ENCODE measurements at regions of chr19 and their contacts with region 1.

Region 1: DNA sequence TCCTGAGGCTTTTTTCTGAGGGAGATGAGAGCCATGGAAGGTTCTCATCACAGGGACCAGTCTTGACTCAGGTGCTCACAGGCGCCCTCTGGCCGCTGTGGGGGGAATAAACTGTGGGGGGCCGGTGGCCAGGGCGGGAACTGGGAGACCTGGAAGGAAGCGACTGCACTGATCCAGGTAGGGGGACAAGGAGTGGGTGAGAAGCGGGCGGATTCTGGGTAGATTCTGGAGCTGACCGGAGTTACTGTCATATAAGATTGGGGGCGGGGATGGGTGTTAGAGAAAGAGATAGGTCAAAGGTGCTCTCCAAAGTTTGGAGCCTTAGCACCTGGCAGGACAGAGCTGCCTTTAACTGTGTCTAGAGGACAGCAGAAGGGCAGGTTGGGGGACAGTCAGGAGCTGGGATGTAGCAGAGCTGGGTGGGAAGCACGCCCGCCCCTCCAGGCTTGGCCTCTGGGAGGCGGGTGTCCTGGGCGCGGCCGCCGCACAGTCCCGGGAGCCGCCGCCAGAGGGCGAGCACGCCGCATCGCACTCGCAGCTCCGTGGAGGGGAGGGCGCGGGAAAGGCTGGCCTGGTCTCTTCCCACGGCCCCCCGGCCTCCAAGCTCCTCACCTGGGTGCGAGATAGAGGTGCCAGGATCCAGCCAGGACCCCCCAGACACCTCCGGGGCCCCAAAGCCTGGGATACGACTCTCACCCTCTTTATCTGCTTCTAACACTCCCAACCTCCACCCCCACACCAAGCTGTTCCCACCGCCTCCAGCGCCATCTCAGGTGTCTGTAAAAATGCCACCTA is 4.2 kb upstream of the DAND5 start:
- DNase-seq: peak; percentile 91
- ATAC-seq: peak; percentile 95
- H3K4me3 Mint-ChIP-seq: peak overlapping the region; percentile 71
- H3K27ac Mint-ChIP-seq: peak overlapping the region; percentile 65
- H3K4me1 Mint-ChIP-seq: 0 out of 2 replicates have a peak, but pooled peaks cover 5% of the 10 kb centered on the region
- H3K27me3 Mint-ChIP-seq: peaks cover 14% of the 10 kb centered on the region
- CTCF ChIP-seq: peak; percentile 85

Region 2: DNA sequence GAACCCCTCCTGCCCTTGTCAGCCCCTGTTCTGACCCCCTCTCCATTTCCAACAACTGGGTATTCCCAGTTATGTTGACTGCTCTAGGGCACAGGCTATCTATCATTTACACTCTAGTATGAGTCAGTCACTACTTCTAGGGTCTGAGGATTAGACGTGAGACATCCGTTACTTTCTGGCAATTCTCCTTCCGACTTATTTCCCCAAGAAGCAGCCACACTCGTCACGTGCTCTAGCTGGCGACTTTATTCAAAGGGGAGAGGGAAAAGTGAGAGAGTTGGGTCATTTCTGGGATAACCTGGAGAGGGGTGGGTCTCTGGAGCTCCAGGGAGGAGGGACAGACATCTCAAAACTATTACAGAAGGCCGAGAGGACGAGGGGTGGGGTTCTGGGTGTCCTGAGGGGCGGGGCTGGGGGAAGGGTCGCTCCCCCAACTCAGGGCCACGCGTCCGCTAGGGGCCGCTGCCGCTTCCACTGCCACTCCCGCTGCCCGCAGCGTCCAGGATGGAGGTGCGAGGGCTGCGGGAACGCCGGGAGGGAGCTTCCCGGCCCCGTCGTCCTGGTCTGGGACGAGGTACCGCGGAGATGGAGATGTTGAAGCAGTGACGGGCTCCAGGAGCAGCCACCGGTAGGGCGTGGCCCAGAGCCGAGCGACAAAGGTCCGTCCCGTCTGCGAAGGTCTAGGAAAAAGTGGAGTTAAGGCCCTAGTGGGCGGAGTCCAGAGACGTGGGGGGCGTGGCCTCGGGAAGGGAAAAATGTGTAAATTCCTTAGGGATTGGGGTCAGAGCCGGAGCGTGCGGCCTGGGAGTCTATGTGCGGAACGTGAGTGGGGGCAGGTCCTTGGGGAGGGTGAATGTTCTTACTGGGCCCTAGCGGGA is 139.7 kb before region 1 on chr19:
- CTCF ChIA-PET with region 1: interaction called, 15 read pairs
- POLR2A ChIA-PET with region 1: no interaction called
- DNase-seq: peak; percentile 94
- ATAC-seq: peak; percentile 85
- H3K4me3 Mint-ChIP-seq: peak overlapping the region; percentile 77
- H3K27ac Mint-ChIP-seq: peak overlapping the region; percentile 89
- H3K4me1 Mint-ChIP-seq: peaks cover 21% of the 10 kb centered on the region
- H3K27me3 Mint-ChIP-seq: peaks cover 31% of the 10 kb centered on the region
- CTCF ChIP-seq: peak; percentile 60

Region 3: GRCh38 chr19:12890787-12891552 is 74.2 kb before region 1 on chr19 and contains the start of gene GCDH:
- CTCF ChIA-PET with region 1: interaction called, 63 read pairs
- POLR2A ChIA-PET with region 1: interaction called, 14 read pairs
- DNase-seq: peak; percentile 98
- ATAC-seq: peak; percentile 96
- H3K4me3 Mint-ChIP-seq: peak within 1 kb of the TSS; percentile 99
- H3K27ac Mint-ChIP-seq: peak within 1 kb of the TSS; percentile 96
- H3K4me1 Mint-ChIP-seq: peaks cover 22% of the 10 kb centered on the region
- H3K27me3 Mint-ChIP-seq: peaks cover 20% of the 10 kb centered on the region
- CTCF ChIP-seq: no peak
- total RNA-seq, gene GCDH: 58.6 to 69.0 TPM (median 59.8 TPM) in 3 replicates

Region 4: GRCh38 chr19:12945479-12946091 is 19.6 kb before region 1 on chr19 and contains the start of gene RAD23A:
- CTCF ChIA-PET with region 1: interaction called, 11 read pairs
- POLR2A ChIA-PET with region 1: interaction called, 4 read pairs
- DNase-seq: peak; percentile 98
- ATAC-seq: peak; percentile 67
- H3K4me3 Mint-ChIP-seq: peak within 1 kb of the TSS; percentile 90
- H3K27ac Mint-ChIP-seq: peak within 1 kb of the TSS; percentile 98
- H3K4me1 Mint-ChIP-seq: peaks cover 17% of the 10 kb centered on the region
- H3K27me3 Mint-ChIP-seq: no peaks in the 10 kb centered on the region; the same call in 1 of the 2 replicates
- CTCF ChIP-seq: no peak
- total RNA-seq, gene RAD23A: 84.3 to 96.6 TPM (median 96.2 TPM) in 3 replicates

Region 5: GRCh38 chr19:13012690-13013608 is 47.7 kb after region 1 on chr19:
- CTCF ChIA-PET with region 1: interaction called, 12 read pairs
- POLR2A ChIA-PET with region 1: no interaction called
- DNase-seq: peak; percentile 44
- ATAC-seq: no peak
- H3K4me3 Mint-ChIP-seq: peak overlapping the region; percentile 58
- H3K27ac Mint-ChIP-seq: no peak overlapping the region
- H3K4me1 Mint-ChIP-seq: peaks cover 59% of the 10 kb centered on the region
- H3K27me3 Mint-ChIP-seq: peaks cover 100% of the 10 kb centered on the region
- CTCF ChIP-seq: no peak

Region 6: GRCh38 chr19:13051267-13052165 is 86.3 kb after region 1 on chr19:
- CTCF ChIA-PET with region 1: interaction called, 44 read pairs
- POLR2A ChIA-PET with region 1: interaction called, 5 read pairs
- DNase-seq: peak; percentile 89
- ATAC-seq: peak; percentile 79
- H3K4me3 Mint-ChIP-seq: peak overlapping the region; percentile 57
- H3K27ac Mint-ChIP-seq: no peak overlapping the region
- H3K4me1 Mint-ChIP-seq: peaks cover 42% of the 10 kb centered on the region
- H3K27me3 Mint-ChIP-seq: peaks cover 99% of the 10 kb centered on the region
- CTCF ChIP-seq: no peak

Region 7: DNA sequence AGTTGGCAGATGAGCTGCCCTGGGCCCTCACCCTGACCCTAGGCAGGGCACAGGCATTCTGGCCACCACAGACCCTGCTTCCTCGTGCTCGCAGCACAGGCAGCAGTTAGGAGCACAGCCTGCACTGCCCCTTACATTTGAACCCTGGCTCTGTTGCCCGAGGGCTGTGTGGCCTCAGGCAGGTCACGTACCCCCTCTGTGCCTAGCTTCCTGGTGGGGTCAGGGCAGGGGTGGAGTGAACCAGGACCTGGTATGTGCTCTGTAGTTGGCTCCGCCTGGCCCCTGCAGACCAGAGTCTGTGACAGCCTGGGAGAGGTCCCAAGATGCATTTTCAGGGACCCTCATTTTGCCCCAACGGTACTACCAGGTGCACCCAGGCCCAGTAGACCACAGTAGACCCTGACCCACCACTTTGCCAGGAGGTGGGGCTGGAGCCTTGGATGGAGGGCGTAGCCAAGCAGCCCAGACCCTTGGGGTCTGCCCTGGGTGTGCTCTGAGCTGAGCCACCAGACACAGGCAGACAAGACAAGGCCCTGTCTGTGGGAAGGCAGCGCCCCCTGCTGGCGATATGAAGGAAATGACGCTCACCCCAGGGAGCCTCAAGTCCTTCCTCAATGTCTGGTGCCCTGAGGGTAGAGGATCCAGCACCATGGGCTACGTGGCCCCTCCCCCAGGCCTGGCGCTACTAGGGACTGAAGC is 128.3 kb after region 1 on chr19:
- CTCF ChIA-PET with region 1: interaction called, 194 read pairs
- POLR2A ChIA-PET with region 1: interaction called, 7 read pairs
- DNase-seq: peak; percentile 84
- ATAC-seq: peak; percentile 41
- H3K4me3 Mint-ChIP-seq: no peak overlapping the region; the same call in 1 of the 2 replicates
- H3K27ac Mint-ChIP-seq: no peak overlapping the region
- H3K4me1 Mint-ChIP-seq: peaks cover 39% of the 10 kb centered on the region
- H3K27me3 Mint-ChIP-seq: peaks cover 52% of the 10 kb centered on the region
- CTCF ChIP-seq: peak; percentile 100

Region 8: DNA sequence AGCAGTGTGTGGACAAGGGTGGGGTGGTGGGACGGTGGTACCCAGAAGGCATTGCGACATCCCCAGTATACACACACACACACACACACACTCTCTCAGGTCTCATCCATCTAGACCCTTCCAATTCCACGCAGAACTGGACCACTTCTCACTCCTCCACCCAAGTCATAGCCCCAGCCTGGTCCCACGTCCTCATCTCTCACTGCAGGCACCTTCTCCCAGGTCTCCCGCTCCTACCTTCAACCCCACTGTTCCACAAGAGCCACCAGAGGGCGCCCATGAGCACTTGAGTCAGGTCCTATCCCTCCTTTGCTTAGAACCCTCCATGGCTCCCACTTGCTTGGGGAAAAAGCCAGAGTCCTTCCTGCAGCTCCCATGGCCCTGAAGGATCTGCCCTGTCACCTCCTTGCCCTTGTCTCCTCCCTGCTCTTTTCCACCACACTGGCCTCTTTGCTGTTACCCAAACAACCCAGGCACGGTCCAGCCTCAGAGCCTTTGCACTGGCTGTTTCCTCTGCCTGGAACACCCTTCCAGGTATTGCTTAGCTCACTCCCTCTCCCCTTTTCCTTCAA is 247.6 kb after region 1 on chr19:
- CTCF ChIA-PET with region 1: no interaction called
- POLR2A ChIA-PET with region 1: no interaction called
- DNase-seq: peak; percentile 84
- ATAC-seq: peak; percentile 64
- H3K4me3 Mint-ChIP-seq: no peak overlapping the region
- H3K27ac Mint-ChIP-seq: no peak overlapping the region
- H3K4me1 Mint-ChIP-seq: peaks cover 17% of the 10 kb centered on the region
- H3K27me3 Mint-ChIP-seq: no peaks in the 10 kb centered on the region
- CTCF ChIP-seq: peak; percentile 80

Measured in WTC11 (cell line).